Mammary epithelial cell (primary cell): ENCODE measurements at regions of chr6 and their contacts with region 1.

Region 1: GRCh38 chr6:119844387-119844786 is 494.8 kb upstream of the MAN1A1 start:
- DNase-seq: no peak
- H3K4me3 ChIP-seq: no peak overlapping the region
- H3K27ac ChIP-seq: no peak overlapping the region
- H3K4me1 ChIP-seq: no peaks in the 10 kb centered on the region
- H3K27me3 ChIP-seq: no peaks in the 10 kb centered on the region
- CTCF ChIP-seq: no peak

Region 2: GRCh38 chr6:119821380-119821779 is 23.0 kb before region 1 on chr6:
- CTCF ChIA-PET with region 1: no interaction called
- dilution Hi-C with region 1: no loop called
- in situ Hi-C with region 1: no loop called
- intact Hi-C with region 1: no loop called
- DNase-seq: no peak
- H3K4me3 ChIP-seq: no peak overlapping the region
- H3K27ac ChIP-seq: no peak overlapping the region
- H3K4me1 ChIP-seq: no peaks in the 10 kb centered on the region
- H3K27me3 ChIP-seq: no peaks in the 10 kb centered on the region
- CTCF ChIP-seq: no peak

Region 3: GRCh38 chr6:119890470-119890869 is 46.1 kb after region 1 on chr6:
- CTCF ChIA-PET with region 1: no interaction called
- dilution Hi-C with region 1: no loop called
- in situ Hi-C with region 1: no loop called
- intact Hi-C with region 1: no loop called
- DNase-seq: peak; percentile 9
- H3K4me3 ChIP-seq: no peak overlapping the region
- H3K27ac ChIP-seq: no peak overlapping the region
- H3K4me1 ChIP-seq: no peaks in the 10 kb centered on the region
- H3K27me3 ChIP-seq: no peaks in the 10 kb centered on the region
- CTCF ChIP-seq: no peak

Region 4: DNA sequence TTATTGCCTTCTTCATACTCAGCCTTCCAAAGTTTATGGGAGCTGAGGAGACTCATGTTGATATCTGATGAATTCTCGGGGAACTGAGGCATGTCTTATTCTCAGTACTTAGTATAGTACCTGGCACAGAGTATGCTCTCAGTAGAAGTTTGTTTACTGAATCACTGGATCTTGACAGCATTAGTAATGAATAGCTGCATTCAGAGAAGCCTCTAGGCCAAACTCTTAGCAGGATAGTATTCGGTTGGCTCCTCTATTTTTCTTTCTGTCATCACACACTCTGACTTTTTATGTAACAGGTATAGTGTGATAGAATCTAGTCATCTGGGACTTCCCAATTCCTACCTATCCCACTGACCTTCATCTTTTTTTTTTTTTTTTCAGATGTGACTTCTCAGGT is 71.6 kb after region 1 on chr6:
- CTCF ChIA-PET with region 1: interaction called, 35 read pairs
- dilution Hi-C with region 1: no loop called
- in situ Hi-C with region 1: no loop called
- intact Hi-C with region 1: no loop called
- DNase-seq: peak; percentile 75
- H3K4me3 ChIP-seq: no peak overlapping the region
- H3K27ac ChIP-seq: no peak overlapping the region
- H3K4me1 ChIP-seq: no peaks in the 10 kb centered on the region
- H3K27me3 ChIP-seq: no peaks in the 10 kb centered on the region
- CTCF ChIP-seq: no peak